Mammary epithelial cell (primary cell): ENCODE measurements at regions of chr1 and their contacts with region 1.

Region 1: GRCh38 chr1:56821140-56821797 is 2.1 kb upstream of the FYB2 start:
- DNase-seq: peak; percentile 48
- H3K4me3 ChIP-seq: no peak overlapping the region
- H3K27ac ChIP-seq: no peak overlapping the region
- H3K4me1 ChIP-seq: peaks cover 26% of the 10 kb centered on the region
- H3K27me3 ChIP-seq: no peaks in the 10 kb centered on the region
- CTCF ChIP-seq: peak; percentile 99

Region 2: GRCh38 chr1:56409094-56409691 is 412.1 kb before region 1 on chr1:
- CTCF ChIA-PET with region 1: no interaction called
- dilution Hi-C with region 1: no loop called
- in situ Hi-C with region 1: no loop called
- intact Hi-C with region 1: loop called (anchors 1 kb)
- DNase-seq: peak; percentile 27
- H3K4me3 ChIP-seq: no peak overlapping the region
- H3K27ac ChIP-seq: no peak overlapping the region
- H3K4me1 ChIP-seq: no peaks in the 10 kb centered on the region
- H3K27me3 ChIP-seq: no peaks in the 10 kb centered on the region
- CTCF ChIP-seq: peak; percentile 62 to 83

Region 3: DNA sequence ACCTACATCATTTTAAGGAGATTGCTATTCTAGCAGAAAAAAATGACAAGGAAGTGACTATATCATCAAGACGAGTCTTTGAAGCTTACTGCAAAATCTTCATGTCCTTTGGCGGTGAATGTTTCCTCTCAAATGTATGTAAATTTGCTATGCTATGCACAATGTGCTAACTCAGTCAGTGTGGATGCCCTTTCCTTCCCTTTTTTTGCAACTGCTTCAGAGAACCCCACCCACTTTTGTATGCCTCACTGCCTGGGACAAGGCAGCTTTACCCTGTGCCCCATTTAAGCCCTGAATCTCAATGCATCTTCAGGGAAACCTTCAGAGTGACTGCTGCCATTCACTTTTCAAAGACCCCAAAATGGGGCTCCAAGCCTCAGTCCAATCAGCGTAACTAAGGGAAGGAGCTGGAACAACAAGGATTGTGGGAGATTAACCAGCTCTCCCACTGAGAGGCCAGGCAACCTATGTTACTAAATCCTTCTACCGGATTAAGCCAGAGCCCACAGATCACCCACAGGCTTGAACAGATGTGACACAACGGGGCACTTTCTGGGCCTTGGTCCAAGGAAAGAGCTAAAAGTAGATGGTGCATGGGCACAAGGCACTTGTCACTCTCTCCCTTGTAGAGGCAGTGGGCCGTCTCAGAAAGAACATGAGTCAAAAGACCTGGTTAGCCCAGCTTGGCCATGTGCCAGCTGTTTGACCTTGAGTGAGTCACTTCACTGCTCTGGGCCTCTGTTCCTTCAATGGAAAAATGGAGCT is 396.3 kb before region 1 on chr1:
- CTCF ChIA-PET with region 1: no interaction called
- dilution Hi-C with region 1: no loop called
- in situ Hi-C with region 1: no loop called
- intact Hi-C with region 1: no loop called
- DNase-seq: peak; percentile 37
- H3K4me3 ChIP-seq: no peak overlapping the region
- H3K27ac ChIP-seq: no peak overlapping the region
- H3K4me1 ChIP-seq: no peaks in the 10 kb centered on the region
- H3K27me3 ChIP-seq: no peaks in the 10 kb centered on the region
- CTCF ChIP-seq: no peak

Region 4: GRCh38 chr1:56709269-56709880 is 111.9 kb before region 1 on chr1:
- CTCF ChIA-PET with region 1: interaction called, 3 read pairs
- dilution Hi-C with region 1: no loop called
- in situ Hi-C with region 1: no loop called
- intact Hi-C with region 1: loop called (anchors 2 kb)
- DNase-seq: peak; percentile 38
- H3K4me3 ChIP-seq: no peak overlapping the region
- H3K27ac ChIP-seq: no peak overlapping the region
- H3K4me1 ChIP-seq: peaks cover 3% of the 10 kb centered on the region
- H3K27me3 ChIP-seq: no peaks in the 10 kb centered on the region
- CTCF ChIP-seq: peak; percentile 52 to 54

Region 5: GRCh38 chr1:56758135-56758534 is 63.1 kb before region 1 on chr1:
- CTCF ChIA-PET with region 1: no interaction called
- dilution Hi-C with region 1: no loop called
- in situ Hi-C with region 1: no loop called
- intact Hi-C with region 1: loop called (anchors 1 kb)
- DNase-seq: peak; percentile 24
- H3K4me3 ChIP-seq: no peak overlapping the region
- H3K27ac ChIP-seq: no peak overlapping the region
- H3K4me1 ChIP-seq: no peaks in the 10 kb centered on the region
- H3K27me3 ChIP-seq: no peaks in the 10 kb centered on the region
- CTCF ChIP-seq: peak in 1 of 2 donors; percentile 53